AG04450 (cell line): ENCODE measurements at regions of chr16 and their contacts with region 1.

Region 1: DNA sequence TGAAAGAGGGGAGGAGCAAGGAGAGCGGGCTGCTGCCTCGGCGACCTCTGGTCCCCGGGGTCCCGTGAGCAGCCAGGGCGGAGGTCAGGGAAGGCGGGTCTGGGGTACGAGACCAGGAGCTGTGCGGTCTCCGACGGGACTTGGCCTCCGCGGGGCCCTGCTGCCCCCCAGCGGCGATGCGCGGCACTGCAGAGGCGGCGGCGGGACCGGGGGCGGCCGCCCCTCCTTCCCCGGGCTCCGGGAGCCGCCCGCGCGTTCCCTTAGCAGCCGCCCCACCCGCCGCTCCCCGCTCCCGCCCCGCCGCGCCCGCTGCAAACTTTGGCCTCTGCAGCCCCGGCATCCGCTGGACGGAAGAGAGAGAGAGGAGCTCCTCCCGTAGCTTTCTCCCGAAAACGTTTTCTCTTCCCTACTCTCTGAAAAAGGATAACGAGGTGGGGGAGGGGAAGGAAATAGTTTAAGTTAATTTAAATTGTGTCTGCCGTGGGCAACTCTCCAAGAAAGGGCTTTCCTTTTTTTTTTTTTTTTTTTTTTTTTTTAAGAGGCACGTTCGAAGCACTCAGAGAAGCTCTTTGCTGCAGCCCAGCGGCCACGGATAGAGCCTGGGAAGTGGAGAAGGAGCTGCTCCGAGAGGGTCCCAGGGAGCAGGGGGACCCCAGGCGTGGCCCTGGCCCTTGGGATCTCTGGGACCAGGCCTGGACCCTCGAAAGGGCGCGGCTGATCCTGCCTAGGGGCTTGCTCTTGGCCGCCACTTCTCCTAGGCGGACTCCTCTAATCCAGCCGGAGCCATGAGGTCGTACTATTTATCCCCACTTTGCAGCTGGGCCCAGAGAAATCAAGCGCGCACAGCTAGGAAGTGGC is 43.2 kb downstream of the C16orf82 start:
- DNase-seq: peak; percentile 18
- H3K4me3 ChIP-seq: peak overlapping the region; percentile 59
- H3K27ac ChIP-seq: no peak overlapping the region
- H3K27me3 ChIP-seq: no peaks in the 10 kb centered on the region
- CTCF ChIP-seq: peak; percentile 78

Region 2: GRCh38 chr16:25279491-25279890 is 1830.4 kb before region 1 on chr16:
- CTCF ChIA-PET with region 1: interaction called, 39 read pairs
- POLR2A ChIA-PET with region 1: no interaction called
- DNase-seq: no peak
- H3K4me3 ChIP-seq: no peak overlapping the region
- H3K27ac ChIP-seq: no peak overlapping the region
- H3K27me3 ChIP-seq: peaks cover 3% of the 10 kb centered on the region
- CTCF ChIP-seq: no peak

Region 3: GRCh38 chr16:26189536-26189935 is 920.4 kb before region 1 on chr16:
- CTCF ChIA-PET with region 1: interaction called, 10 read pairs
- POLR2A ChIA-PET with region 1: no interaction called
- DNase-seq: no peak
- H3K4me3 ChIP-seq: no peak overlapping the region
- H3K27ac ChIP-seq: no peak overlapping the region
- H3K27me3 ChIP-seq: no peaks in the 10 kb centered on the region
- CTCF ChIP-seq: no peak

Region 4: GRCh38 chr16:26963114-26963513 is 146.8 kb before region 1 on chr16:
- CTCF ChIA-PET with region 1: interaction called, 18 read pairs
- POLR2A ChIA-PET with region 1: no interaction called
- DNase-seq: no peak
- H3K4me3 ChIP-seq: no peak overlapping the region
- H3K27ac ChIP-seq: no peak overlapping the region
- H3K27me3 ChIP-seq: no peaks in the 10 kb centered on the region
- CTCF ChIP-seq: peak; percentile 44

Region 5: GRCh38 chr16:27145630-27146029 is 35.7 kb after region 1 on chr16:
- CTCF ChIA-PET with region 1: interaction called, 12 read pairs
- POLR2A ChIA-PET with region 1: no interaction called
- DNase-seq: no peak
- H3K4me3 ChIP-seq: no peak overlapping the region
- H3K27ac ChIP-seq: no peak overlapping the region
- H3K27me3 ChIP-seq: peaks cover 3% of the 10 kb centered on the region
- CTCF ChIP-seq: no peak